Activated T-helper 1 cell treated with anti-CD3 and anti-CD28 coated beads, Interleukin-12 subunit alpha, Interleukin-12 subunit beta, Interleukin-2, Interleukin-4 antibody, amounts not matched to agents 30 ng/mL and 10 ng/mL and 1 ng/mL, durations not matched to agents 14 hours and 24 hours and 36 hours (primary cell): ENCODE measurements at regions of chr3 and their contacts with region 1.

Region 1: DNA sequence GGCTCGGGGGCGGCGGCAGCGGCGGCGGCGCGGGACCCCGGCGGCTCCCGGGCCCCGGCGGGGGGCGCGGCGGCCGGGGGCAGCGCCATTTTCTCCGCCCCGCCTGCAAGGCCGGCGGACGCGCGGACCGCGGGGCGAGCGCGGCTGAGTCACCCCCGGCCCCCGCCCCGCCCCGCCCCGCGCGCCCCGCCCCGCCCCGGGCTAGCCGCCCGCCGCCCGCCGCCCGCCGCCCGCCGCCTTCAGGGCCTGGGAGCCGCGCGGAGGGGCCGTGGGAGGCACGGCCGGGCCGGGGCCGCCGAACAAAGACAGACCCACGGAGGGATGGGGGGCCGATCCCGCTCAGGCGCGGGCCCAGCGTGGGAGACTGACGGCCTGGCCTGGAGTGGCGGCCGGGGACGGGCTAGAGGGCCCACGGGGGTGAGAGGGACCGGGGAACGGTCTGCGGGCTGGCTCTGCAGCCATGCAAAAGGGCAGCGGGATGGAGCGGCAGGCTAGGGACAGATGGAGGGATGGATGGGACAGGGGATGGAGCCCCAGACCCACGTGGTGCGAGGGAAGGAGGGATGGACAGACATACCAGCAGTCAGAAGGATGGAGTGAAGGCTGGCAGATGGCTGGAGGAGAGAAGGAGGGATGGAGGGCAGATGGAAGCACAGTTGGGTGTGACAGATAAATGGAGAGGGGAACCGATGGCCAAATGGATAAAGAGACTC is at the start of gene EIF4E3:
- DNase-seq: peak; percentile 43
- H3K4me3 Mint-ChIP-seq: peak within 1 kb of the TSS; percentile 90
- H3K27ac Mint-ChIP-seq: peak within 1 kb of the TSS; percentile 95
- H3K4me1 Mint-ChIP-seq: peaks cover 75% of the 10 kb centered on the region
- H3K27me3 Mint-ChIP-seq: no peaks in the 10 kb centered on the region
- total RNA-seq, gene EIF4E3: 20.6 and 21.8 TPM in 2 replicates

Region 2: GRCh38 chr3:71064288-71064955 is 661.0 kb before region 1 on chr3:
- intact Hi-C with region 1: loop called (anchors 5 kb)
- DNase-seq: peak; percentile 59
- H3K4me3 Mint-ChIP-seq: no peak overlapping the region
- H3K27ac Mint-ChIP-seq: no peak overlapping the region
- H3K4me1 Mint-ChIP-seq: peaks cover 39% of the 10 kb centered on the region
- H3K27me3 Mint-ChIP-seq: no peaks in the 10 kb centered on the region

Region 3: DNA sequence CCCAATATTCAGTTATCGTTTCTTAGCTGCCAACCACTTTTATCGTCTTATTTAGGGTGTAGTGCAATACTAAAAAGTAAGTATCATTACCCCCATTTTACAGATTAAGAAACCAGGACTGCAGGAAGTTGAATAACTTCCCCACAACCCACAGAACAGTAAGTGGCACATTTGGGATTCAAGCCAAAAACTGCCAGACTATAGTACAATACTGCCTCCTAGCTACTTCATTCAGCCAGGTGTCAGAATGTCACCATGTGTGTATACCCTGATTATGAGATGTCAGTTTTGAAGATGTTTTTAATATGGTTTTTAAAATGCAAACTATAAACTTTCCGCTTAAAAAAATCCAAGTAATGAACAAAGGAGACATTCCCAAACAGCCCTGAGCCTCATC is 133.7 kb after region 1 on chr3:
- intact Hi-C with region 1: loop called (anchors 1 kb)
- DNase-seq: no peak
- H3K4me3 Mint-ChIP-seq: no peak overlapping the region
- H3K27ac Mint-ChIP-seq: no peak overlapping the region
- H3K4me1 Mint-ChIP-seq: peaks cover 5% of the 10 kb centered on the region
- H3K27me3 Mint-ChIP-seq: peaks cover 7% of the 10 kb centered on the region

Region 4: DNA sequence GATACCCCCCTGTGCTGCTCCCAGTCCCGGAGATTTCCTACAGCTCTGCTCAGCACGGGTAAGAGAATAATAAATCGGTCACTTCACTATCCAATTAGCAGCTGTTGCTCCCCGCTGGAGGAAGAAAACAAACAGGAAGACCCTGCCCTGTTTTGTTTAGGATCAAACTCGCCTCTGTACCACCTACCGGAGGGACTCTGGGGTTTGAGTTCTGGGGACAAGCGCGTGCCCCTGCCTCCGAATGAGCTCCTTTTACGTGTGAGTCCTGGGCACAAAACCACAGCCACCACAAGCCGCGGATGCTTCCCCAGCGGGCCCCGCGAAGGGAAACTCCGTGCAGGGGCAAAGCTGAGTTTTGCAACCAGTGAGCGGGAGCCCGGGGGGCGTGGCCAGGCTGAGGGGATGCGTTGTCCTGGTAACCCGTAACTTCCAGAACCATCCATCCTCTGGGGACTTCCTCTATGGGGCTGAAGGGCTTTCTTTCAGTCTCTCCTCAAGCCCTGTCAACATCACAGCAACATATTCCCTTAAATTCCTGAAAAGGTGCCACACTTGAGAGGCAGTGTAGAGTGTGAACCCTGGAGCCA is 375.3 kb after region 1 on chr3:
- intact Hi-C with region 1: loop called (anchors 10 kb)
- DNase-seq: peak; percentile 95
- H3K4me3 Mint-ChIP-seq: peak overlapping the region; percentile 78
- H3K27ac Mint-ChIP-seq: peak overlapping the region; percentile 88
- H3K4me1 Mint-ChIP-seq: peaks cover 32% of the 10 kb centered on the region
- H3K27me3 Mint-ChIP-seq: peaks cover 5% of the 10 kb centered on the region

Region 5: DNA sequence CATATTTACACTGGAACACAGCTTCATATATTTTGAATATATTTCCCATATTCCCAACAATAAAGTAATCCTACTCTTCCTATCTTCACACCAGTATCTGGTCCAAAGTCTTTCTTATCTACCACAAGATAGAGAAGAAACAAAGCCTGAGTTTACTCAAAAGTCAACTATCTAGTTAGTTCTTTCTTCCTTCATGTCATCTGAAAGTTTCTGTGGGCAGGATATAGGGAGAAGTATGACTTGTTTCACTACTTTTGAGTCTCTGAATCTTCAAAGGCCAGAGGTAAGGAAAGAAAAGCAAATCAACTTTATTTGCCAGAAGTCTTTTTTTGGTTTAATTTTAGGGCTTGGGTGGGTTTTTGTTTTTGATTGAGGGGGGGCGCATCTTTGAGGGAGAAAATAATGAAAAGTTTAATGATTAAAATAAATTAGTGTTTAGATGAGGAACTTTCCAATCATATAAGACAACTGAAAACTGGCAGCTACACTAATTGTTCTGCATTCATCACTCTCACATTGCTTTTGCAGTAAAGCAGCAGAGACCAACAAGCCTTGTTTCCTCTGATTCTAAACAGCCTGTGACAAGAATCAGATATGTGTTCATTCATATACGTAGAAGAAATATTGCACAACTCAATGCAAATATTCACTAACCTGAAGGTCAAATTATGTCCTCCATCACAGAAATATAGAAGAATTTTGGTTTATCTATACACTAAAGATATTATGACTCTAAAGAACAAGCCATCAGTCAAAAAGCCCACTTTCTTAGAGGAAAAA is 701.4 kb after region 1 on chr3:
- intact Hi-C with region 1: loop called (anchors 5 kb)
- DNase-seq: no peak
- H3K4me3 Mint-ChIP-seq: peak overlapping the region; percentile 69
- H3K27ac Mint-ChIP-seq: peak overlapping the region; percentile 97
- H3K4me1 Mint-ChIP-seq: peaks cover 62% of the 10 kb centered on the region
- H3K27me3 Mint-ChIP-seq: no peaks in the 10 kb centered on the region

Region 6: GRCh38 chr3:72756900-72757299 is 1031.5 kb after region 1 on chr3:
- intact Hi-C with region 1: loop called (anchors 5 kb)
- DNase-seq: peak; percentile 38
- H3K4me3 Mint-ChIP-seq: peak overlapping the region; percentile 34
- H3K27ac Mint-ChIP-seq: peak overlapping the region; percentile 64
- H3K4me1 Mint-ChIP-seq: peaks cover 50% of the 10 kb centered on the region
- H3K27me3 Mint-ChIP-seq: no peaks in the 10 kb centered on the region